ENCODE measurements at regions of chr10 and their contacts with region 1.

Region 1: GRCh38 chr10:6202684-6203330 is at the start of gene PFKFB3:
- DNase-seq: no peak
- H3K4me3 ChIP-seq: peak within 1 kb of the TSS; percentile 95
- H3K27me3 ChIP-seq: no peaks in the 10 kb centered on the region
- CTCF ChIP-seq: peak; percentile 70
- polyA plus RNA-seq, gene PFKFB3: 15.6 and 30.7 TPM in 2 replicates

Region 2: GRCh38 chr10:5692461-5693358 is 510.1 kb before region 1 on chr10:
- CTCF ChIA-PET with region 1: no interaction called
- POLR2A ChIA-PET with region 1: no interaction called
- DNase-seq: no peak
- H3K4me3 ChIP-seq: peak overlapping the region; percentile 53
- H3K27me3 ChIP-seq: no peaks in the 10 kb centered on the region
- CTCF ChIP-seq: no peak

Region 3: GRCh38 chr10:6088721-6089390 is 114.0 kb before region 1 on chr10 and contains the start of gene RBM17:
- CTCF ChIA-PET with region 1: interaction called, 14 read pairs
- POLR2A ChIA-PET with region 1: no interaction called
- DNase-seq: peak; percentile 75
- H3K4me3 ChIP-seq: peak within 1 kb of the TSS; percentile 92
- H3K27me3 ChIP-seq: 0 out of 2 replicates have a peak, but pooled peaks cover 3% of the 10 kb centered on the region
- CTCF ChIP-seq: peak; percentile 100
- polyA plus RNA-seq, gene RBM17: 28.9 and 31.7 TPM in 2 replicates

Region 4: DNA sequence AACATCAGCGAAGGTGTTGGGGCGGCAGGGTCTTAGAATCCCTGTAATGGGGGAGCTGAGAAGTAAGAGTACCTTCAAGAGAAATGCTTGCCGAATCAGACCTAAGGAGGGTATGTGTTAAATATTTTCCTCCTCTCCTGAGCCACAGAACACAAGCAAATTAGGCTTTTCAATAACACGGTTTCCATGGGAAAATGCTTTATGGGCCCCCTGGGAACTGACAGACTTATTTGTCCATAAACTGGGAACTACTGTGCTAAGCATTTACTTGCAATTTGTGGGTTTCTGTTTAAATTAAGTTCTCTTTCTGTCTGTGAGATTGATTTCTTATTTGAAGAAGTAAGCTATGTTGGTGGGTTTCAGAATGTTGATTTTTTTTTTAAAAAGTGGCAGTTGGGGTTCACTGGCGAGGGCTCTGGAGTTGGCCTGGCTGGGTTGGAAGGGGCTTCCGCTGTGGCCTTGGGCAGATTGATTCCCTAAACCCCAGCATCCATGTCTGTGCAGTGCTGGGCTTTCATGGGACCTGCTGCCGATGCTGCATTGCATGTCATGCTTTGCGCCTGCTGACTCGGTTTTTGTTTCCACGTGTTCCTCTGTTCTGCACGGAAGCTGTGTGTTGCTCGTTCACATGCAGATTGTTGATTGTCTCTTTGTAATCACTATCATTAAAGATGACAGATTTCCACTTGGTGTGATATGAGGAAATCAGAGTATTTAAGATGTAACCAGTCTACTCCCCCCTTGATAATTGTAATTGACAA is 106.8 kb before region 1 on chr10:
- CTCF ChIA-PET with region 1: interaction called, 14 read pairs
- POLR2A ChIA-PET with region 1: no interaction called
- DNase-seq: no peak
- H3K4me3 ChIP-seq: no peak overlapping the region
- H3K27me3 ChIP-seq: no peaks in the 10 kb centered on the region
- CTCF ChIP-seq: no peak

Region 5: GRCh38 chr10:6108603-6109443 is 94.0 kb before region 1 on chr10:
- CTCF ChIA-PET with region 1: interaction called, 21 read pairs
- POLR2A ChIA-PET with region 1: no interaction called
- DNase-seq: no peak
- H3K4me3 ChIP-seq: no peak overlapping the region
- H3K27me3 ChIP-seq: no peaks in the 10 kb centered on the region
- CTCF ChIP-seq: peak; percentile 64

Region 6: DNA sequence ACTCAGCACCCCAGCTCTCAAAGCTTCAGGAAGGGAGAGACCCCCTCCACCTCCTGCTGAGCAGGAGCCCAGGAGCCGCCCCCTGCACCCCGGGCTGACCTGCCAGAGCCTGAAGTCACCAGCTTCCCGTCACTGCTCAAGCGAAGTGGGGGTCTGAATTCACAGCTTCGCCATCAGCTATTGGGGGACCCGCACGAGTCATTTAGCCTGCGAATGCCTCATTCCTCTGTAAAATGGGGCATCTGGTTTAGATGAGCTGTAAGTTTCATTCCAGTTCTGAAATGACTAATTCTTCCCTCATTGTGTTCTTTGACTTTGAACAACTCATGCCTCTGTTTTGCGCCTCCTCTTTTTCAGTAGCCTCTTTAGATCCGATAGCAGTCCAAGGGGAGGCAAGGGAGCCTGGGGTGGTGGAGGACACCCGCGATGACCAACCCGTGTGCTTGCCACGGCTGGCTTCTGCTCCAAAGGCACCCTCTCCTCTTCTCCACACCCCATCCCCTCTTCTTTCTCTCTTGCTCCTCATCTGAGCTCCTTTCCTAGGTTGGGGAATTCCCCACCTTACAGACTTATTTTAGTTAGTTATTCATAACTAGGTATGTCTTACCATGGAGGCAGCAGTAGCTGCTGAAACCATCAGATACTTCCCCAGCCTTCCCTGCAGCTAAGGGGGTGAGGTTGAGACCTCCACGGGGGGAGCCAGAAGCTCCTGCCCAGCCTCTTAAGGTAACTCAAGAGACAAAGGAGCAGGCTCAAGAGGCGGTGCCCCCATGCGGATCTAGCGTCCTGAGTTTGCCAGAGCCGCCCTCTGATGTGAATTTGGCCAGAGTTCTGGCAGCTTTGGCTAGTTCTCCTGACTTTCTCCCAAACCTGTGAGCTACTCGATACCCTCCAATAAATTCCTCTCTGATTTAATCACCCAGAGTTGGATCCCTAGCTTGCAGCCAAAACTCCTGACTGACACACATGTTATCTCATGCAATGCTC is 66.3 kb before region 1 on chr10:
- CTCF ChIA-PET with region 1: interaction called, 10 read pairs
- POLR2A ChIA-PET with region 1: interaction called, 5 read pairs
- DNase-seq: peak; percentile 47
- H3K4me3 ChIP-seq: no peak overlapping the region; the same call in 1 of the 2 replicates
- H3K27me3 ChIP-seq: no peaks in the 10 kb centered on the region; the same call in 1 of the 2 replicates
- CTCF ChIP-seq: peak; percentile 12; the same call in 1 of the 2 replicates

Region 7: DNA sequence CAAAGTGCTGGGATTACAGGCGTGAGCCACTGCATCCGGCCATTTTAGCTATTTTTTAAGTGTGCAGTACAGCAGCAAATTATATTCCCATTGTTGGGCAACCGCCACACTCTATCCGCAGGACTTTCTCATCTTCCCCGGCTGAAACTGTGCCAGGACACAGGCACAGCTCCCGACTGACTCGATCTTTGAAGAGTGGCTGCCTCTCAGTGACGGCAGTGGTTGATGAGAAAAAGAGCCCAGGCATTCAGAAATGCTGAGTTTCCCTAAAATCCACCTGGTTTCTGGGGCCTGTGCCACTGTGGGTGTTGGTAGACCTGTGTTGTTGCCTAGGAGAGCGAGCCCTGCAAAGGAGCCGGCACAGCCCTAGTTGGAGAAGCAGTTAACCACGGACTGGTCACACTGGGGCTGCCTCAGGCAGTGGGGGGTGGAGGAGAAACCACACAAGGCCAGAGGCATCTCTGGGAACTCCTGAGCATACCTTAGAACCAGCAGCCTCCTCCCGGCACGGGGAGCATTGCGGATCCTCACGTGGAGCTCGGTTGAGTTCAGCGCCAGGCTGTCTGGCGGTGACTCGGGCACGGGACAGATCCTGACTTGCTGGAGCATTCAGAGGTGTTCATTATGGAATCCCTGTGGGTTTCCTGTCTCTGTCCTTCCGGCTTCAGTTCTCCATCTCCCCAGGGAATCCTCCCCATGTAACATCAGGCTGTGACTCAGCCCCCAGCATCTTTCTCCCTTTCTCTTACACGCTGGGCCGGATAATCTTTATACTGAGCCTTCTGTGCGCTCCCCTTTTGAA is 16.1 kb after region 1 on chr10:
- CTCF ChIA-PET with region 1: interaction called, 27 read pairs
- POLR2A ChIA-PET with region 1: no interaction called
- DNase-seq: no peak
- H3K4me3 ChIP-seq: no peak overlapping the region
- H3K27me3 ChIP-seq: no peaks in the 10 kb centered on the region
- CTCF ChIP-seq: no peak

Region 8: GRCh38 chr10:6232846-6233724 is 30.3 kb after region 1 on chr10:
- CTCF ChIA-PET with region 1: interaction called, 14 read pairs
- POLR2A ChIA-PET with region 1: no interaction called
- DNase-seq: no peak
- H3K4me3 ChIP-seq: no peak overlapping the region
- H3K27me3 ChIP-seq: no peaks in the 10 kb centered on the region
- CTCF ChIP-seq: no peak